SK-N-SH (cell line): ENCODE measurements at regions of chr4 and their contacts with region 1.

Region 1: GRCh38 chr4:4677556-4678522 is 136.0 kb upstream of the STX18 start:
- DNase-seq: peak; percentile 67
- H3K4me3 ChIP-seq: peak overlapping the region in 1 of 2 experiments; percentile 35; a peak in 1 of 4 replicates
- H3K27ac ChIP-seq: no peak overlapping the region
- H3K4me1 ChIP-seq: no peaks in the 10 kb centered on the region
- H3K27me3 ChIP-seq: no peaks in the 10 kb centered on the region
- CTCF ChIP-seq: peak; percentile 54
- EP300 ChIP-seq: no peak
- RAD21 ChIP-seq: peak; percentile 75

Region 2: DNA sequence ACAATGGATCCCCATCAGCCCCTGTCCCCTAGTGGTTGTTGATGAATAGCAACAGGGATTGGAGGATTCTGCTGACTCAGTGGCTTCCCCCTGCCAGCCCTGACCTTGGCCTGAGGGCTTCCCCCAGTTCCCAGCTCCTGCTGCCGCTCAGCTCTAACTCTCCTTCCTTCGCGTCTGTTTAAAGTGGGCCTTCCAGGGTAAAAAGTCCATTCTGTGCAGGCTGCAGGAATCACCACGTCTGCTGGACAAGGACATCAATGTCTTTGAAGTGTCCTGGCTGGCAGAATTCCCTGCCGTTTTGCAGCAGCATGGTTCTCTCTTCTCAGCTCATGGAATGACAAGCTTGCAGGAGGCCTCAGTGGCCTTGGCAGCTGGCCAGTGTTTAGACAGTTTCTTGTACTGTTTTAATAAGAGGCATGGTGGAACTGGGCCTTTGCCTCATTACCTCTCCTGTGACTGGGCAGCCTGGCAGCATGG is 16.5 kb after region 1 on chr4:
- CTCF ChIA-PET with region 1: interaction called, 10 read pairs
- POLR2A ChIA-PET with region 1: no interaction called
- DNase-seq: peak; percentile 30
- H3K4me3 ChIP-seq: no peak overlapping the region
- H3K27ac ChIP-seq: no peak overlapping the region
- H3K4me1 ChIP-seq: peaks cover 0 to 5% of the 10 kb centered on the region in 2 experiments; a peak in 1 of 4 replicates
- H3K27me3 ChIP-seq: no peaks in the 10 kb centered on the region
- CTCF ChIP-seq: peak; percentile 38
- EP300 ChIP-seq: no peak
- RAD21 ChIP-seq: no peak

Region 3: GRCh38 chr4:4880492-4880891 is 202.7 kb after region 1 on chr4:
- CTCF ChIA-PET with region 1: interaction called, 16 read pairs
- POLR2A ChIA-PET with region 1: no interaction called
- DNase-seq: no peak
- H3K4me3 ChIP-seq: no peak overlapping the region
- H3K27ac ChIP-seq: no peak overlapping the region
- H3K4me1 ChIP-seq: no peaks in the 10 kb centered on the region
- H3K27me3 ChIP-seq: peaks cover 12% of the 10 kb centered on the region; the same call in 1 of the 2 replicates
- CTCF ChIP-seq: peak; percentile 58
- EP300 ChIP-seq: no peak
- RAD21 ChIP-seq: peak; percentile 64